Transverse colon (tissue), 4 donors: ENCODE measurements at regions of chr5 and their contacts with region 1.

Region 1: GRCh38 chr5:142059294-142059940 is 46.6 kb upstream of the GNPDA1 start:
- DNase-seq: no peak
- H3K4me3 ChIP-seq: no peak overlapping the region
- H3K27ac ChIP-seq: no peak overlapping the region
- H3K4me1 ChIP-seq: peaks cover 0 to 7% (median 0%) of the 10 kb centered on the region in 4 donors
- H3K27me3 ChIP-seq: no peaks in the 10 kb centered on the region
- CTCF ChIP-seq: no peak
- EP300 ChIP-seq: no peak
- POLR2A ChIP-seq: no peak

Region 2: DNA sequence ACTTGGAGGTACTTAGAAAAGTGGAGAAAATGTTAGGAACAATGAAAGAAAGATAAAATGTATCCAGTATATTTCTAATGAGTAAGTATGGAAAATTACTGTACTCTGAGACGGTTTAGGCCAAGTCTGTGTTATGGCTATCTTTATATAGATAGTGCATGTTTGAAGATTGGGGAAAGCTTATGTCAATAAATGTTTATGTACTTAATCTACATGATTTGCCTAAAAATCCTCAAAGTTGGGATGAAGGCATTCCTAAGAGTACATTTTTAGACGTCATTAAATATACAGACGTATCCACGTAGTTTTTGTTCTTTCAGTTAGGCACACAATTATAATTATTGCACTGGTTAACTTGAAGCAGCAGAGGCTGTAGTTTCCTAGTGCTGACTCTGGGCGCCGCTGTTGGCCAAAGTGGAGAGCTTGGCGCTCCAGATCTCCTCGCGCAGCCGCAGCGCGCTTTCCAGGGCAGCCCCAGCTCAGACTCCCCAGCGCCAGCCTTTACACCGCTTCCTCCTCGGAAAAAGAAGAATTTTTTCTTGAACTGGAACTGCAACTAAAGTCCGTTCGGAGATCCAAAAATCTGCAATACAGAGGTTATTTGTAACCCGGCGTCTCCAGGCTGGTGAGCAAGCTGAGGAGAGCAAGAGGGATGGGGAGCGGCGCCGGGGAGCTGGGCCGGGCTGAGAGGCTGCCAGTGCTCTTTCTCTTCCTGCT is 672.0 kb before region 1 on chr5 and contains the start of gene PCDHGB4:
- in situ Hi-C with region 1: no loop called
- intact Hi-C with region 1: no loop called
- DNase-seq: no peak
- H3K4me3 ChIP-seq: peak within 1 kb of the TSS in 1 of 4 donors; percentile 21
- H3K27ac ChIP-seq: no peak within 1 kb of the TSS
- H3K4me1 ChIP-seq: no peaks in the 10 kb centered on the region
- H3K27me3 ChIP-seq: peaks cover 12% of the 10 kb centered on the region
- CTCF ChIP-seq: peak in 1 of 5 experiments; percentile 6
- EP300 ChIP-seq: no peak
- POLR2A ChIP-seq: no peak
- total RNA-seq, gene PCDHGB4: 0.40 to 4.4 (median 2.4) TPM

Region 3: GRCh38 chr5:141976176-141976575 is 83.2 kb before region 1 on chr5:
- in situ Hi-C with region 1: no loop called
- intact Hi-C with region 1: loop called (anchors 5 kb)
- DNase-seq: no peak
- H3K4me3 ChIP-seq: no peak overlapping the region
- H3K27ac ChIP-seq: no peak overlapping the region
- H3K4me1 ChIP-seq: peaks cover 0 to 28% (median 5%) of the 10 kb centered on the region in 4 donors
- H3K27me3 ChIP-seq: no peaks in the 10 kb centered on the region
- CTCF ChIP-seq: no peak
- EP300 ChIP-seq: no peak
- POLR2A ChIP-seq: no peak